PC-3 (cell line): ENCODE measurements at regions of chr10 and their contacts with region 1.

Region 1: DNA sequence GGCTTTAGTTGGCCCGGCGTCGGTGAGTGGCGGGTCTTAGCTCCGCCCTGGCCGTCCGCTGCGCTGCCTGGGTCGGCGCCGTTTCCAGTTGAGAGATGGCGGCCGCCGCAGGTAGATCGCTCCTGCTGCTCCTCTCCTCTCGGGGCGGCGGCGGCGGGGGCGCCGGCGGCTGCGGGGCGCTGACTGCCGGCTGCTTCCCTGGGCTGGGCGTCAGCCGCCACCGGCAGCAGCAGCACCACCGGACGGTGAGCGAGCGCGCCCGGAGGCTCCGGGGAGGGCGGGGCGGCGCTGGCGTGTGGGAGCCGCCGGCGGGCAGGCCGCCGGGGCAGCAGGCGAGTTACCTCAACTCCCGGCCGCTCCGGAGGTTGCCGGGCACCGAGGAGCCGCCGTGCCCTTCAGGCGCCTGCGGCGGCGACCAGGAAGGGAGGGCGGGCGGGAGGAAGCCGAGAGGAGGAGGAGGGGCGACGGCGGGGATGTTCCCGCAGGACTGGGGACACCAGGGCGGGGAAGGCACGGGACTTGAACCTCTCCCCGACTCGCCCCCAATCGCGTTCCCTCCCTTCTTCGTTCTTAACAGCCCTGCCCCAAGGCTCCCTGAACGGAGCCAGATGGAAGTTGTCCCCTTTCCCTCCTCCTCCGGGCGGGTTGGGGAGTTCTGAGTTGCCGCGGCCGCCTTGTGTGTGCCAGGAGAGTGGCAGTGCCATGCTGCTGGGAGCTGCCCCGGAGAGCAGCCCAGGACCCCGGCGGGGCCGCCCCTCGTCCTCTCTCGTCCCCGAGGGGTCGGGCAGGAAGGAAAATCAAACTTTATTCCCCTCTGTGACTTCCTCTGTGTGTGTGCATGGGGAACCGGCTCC is at the start of gene MCU:
- DNase-seq: peak; percentile 89
- ATAC-seq: peak; percentile 88
- H3K4me3 ChIP-seq: peak within 1 kb of the TSS; percentile 94
- H3K27ac ChIP-seq: no peak within 1 kb of the TSS; the same call in 1 of the 2 replicates
- H3K4me1 ChIP-seq: peaks cover 49% of the 10 kb centered on the region
- H3K27me3 ChIP-seq: no peaks in the 10 kb centered on the region
- CTCF ChIP-seq: no peak
- total RNA-seq, gene MCU: 16.4 and 21.5 TPM in 2 replicates

Region 2: GRCh38 chr10:72364239-72364777 is 328.0 kb before region 1 on chr10:
- CTCF ChIA-PET with region 1: no interaction called
- POLR2A ChIA-PET with region 1: no interaction called
- intact Hi-C with region 1: loop called (anchors 2 kb)
- DNase-seq: peak; percentile 88
- ATAC-seq: peak; percentile 98
- H3K4me3 ChIP-seq: no peak overlapping the region; the same call in 1 of the 2 replicates
- H3K27ac ChIP-seq: peak overlapping the region; percentile 26; the same call in 1 of the 2 replicates
- H3K4me1 ChIP-seq: peaks cover 12% of the 10 kb centered on the region
- H3K27me3 ChIP-seq: no peaks in the 10 kb centered on the region
- CTCF ChIP-seq: peak; percentile 81

Region 3: DNA sequence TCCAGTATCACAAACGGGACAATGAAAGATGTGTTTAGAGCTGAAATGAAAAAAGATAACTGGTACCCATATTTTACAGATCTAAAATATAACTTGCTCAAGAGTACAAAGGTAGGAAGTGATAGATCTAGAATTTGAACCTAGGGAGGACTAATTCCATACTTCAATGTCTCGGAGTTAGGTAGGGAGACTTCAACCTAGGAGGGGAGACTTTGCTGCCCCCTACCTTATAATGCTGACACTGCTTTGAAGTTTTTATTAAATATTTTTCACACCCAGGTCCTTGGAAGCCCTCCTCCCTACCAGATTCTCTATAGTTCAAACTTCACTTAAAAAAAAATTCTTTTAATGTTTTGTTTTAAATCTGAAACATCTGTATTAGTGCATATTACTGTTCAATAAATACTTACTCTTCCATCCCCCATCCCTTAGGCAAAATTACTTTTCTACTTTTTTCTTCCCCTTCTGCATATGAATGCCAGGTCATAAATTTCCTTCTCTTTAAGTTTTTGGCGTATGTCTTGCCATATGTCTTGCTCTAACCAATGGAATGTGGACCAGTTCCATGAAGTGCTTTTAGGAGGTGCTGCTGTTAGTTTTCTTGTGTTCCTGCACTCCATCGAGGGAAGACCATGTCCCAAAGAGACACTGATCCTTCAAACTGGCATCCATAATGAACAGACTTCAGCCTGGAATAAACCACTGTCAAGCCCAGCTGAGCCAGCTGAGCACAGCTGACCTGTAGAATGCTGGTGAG is 124.2 kb before region 1 on chr10:
- CTCF ChIA-PET with region 1: interaction called, 10 read pairs
- POLR2A ChIA-PET with region 1: no interaction called
- intact Hi-C with region 1: no loop called
- DNase-seq: peak; percentile 48
- ATAC-seq: peak; percentile 45
- H3K4me3 ChIP-seq: no peak overlapping the region
- H3K27ac ChIP-seq: peak overlapping the region; percentile 43
- H3K4me1 ChIP-seq: peaks cover 16% of the 10 kb centered on the region
- H3K27me3 ChIP-seq: no peaks in the 10 kb centered on the region
- CTCF ChIP-seq: no peak; the same call in 1 of the 2 replicates

Region 4: GRCh38 chr10:72625608-72626443 is 66.5 kb before region 1 on chr10 and contains the start of gene MICU1:
- CTCF ChIA-PET with region 1: no interaction called
- POLR2A ChIA-PET with region 1: interaction called, 5 read pairs
- intact Hi-C with region 1: loop called (anchors 1 kb)
- DNase-seq: peak; percentile 94
- ATAC-seq: peak; percentile 96
- H3K4me3 ChIP-seq: peak within 1 kb of the TSS; percentile 87
- H3K27ac ChIP-seq: peak within 1 kb of the TSS; percentile 24
- H3K4me1 ChIP-seq: peaks cover 9% of the 10 kb centered on the region; the same call in 1 of the 2 replicates
- H3K27me3 ChIP-seq: no peaks in the 10 kb centered on the region
- CTCF ChIP-seq: no peak
- total RNA-seq, gene MICU1: 19.8 and 24.9 TPM in 2 replicates

Region 5: DNA sequence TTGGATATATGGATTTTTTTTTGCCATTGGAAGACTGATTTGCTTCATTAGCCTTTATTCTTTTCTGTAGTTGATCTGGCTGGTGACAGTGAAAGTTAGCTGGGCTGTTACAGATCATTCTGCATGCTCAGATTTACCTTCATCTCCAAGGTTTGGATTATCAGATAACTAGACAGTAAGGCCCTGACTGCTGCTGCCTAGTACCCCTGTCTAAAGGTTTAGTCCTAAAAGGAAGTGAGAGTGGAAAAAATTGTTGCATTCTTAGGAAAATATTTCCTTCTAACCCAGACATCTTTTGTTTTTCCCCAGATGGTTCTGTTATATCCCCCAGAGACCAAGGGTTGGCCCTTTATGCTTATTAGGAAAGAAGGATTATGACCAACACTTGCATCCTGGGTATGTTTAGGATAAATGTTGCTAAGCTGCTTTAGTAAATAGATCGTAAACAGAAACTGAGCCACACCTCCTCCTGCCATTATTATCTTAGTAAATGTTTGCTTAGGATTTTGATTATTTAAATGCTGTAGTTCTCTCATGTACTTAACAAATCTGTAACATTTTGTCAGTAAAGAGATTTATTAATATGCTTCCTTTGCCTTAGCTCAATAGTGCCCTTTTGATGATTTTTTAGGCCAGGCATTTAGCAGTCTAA is 44.0 kb after region 1 on chr10:
- CTCF ChIA-PET with region 1: no interaction called
- POLR2A ChIA-PET with region 1: no interaction called
- intact Hi-C with region 1: loop called (anchors 5 kb)
- DNase-seq: no peak
- ATAC-seq: peak; percentile 73
- H3K4me3 ChIP-seq: no peak overlapping the region
- H3K27ac ChIP-seq: 0 out of 2 replicates have a peak overlapping the region, but pooled peaks have one; percentile 1
- H3K4me1 ChIP-seq: peaks cover 11% of the 10 kb centered on the region
- H3K27me3 ChIP-seq: no peaks in the 10 kb centered on the region
- CTCF ChIP-seq: no peak